Dorsolateral prefrontal cortex (tissue), 120 donors: ENCODE measurements at regions of chr17 and their contacts with region 1.

Region 1: GRCh38 chr17:48131216-48131824 is 23.8 kb downstream of the SNX11 start:
- DNase-seq: peak in 4 of 10 donors; percentile 38 to 60 (median 53)
- H3K4me3 ChIP-seq: no peak overlapping the region
- H3K27ac ChIP-seq: no peak overlapping the region
- H3K27me3 ChIP-seq: no peaks in the 10 kb centered on the region
- CTCF ChIP-seq: peak; percentile 50 to 95 (median 87)

Region 2: GRCh38 chr17:47929218-47930000 is 201.9 kb before region 1 on chr17:
- intact Hi-C with region 1: no loop called
- DNase-seq: no peak
- H3K4me3 ChIP-seq: no peak overlapping the region
- H3K27ac ChIP-seq: peak overlapping the region; percentile 7 to 91 (median 71)
- H3K27me3 ChIP-seq: no peaks in the 10 kb centered on the region
- CTCF ChIP-seq: no peak

Region 3: GRCh38 chr17:48055442-48056237 is 75.7 kb before region 1 on chr17:
- intact Hi-C with region 1: no loop called
- DNase-seq: no peak
- H3K4me3 ChIP-seq: peak overlapping the region in 57 of 59 donors; percentile 14 to 95 (median 60)
- H3K27ac ChIP-seq: peak overlapping the region in 49 of 59 donors; percentile 27 to 99 (median 87)
- H3K27me3 ChIP-seq: no peaks in the 10 kb centered on the region
- CTCF ChIP-seq: no peak

Region 4: GRCh38 chr17:48074315-48075081 is 56.8 kb before region 1 on chr17:
- intact Hi-C with region 1: loop called in 1 of 2 experiments (anchors 5 kb)
- DNase-seq: peak in 6 of 10 donors; percentile 37 to 90 (median 68)
- H3K4me3 ChIP-seq: no peak overlapping the region
- H3K27ac ChIP-seq: peak overlapping the region in 23 of 59 donors; percentile 7 to 67 (median 27)
- H3K27me3 ChIP-seq: no peaks in the 10 kb centered on the region
- CTCF ChIP-seq: peak; percentile 66 to 95 (median 86)

Region 5: DNA sequence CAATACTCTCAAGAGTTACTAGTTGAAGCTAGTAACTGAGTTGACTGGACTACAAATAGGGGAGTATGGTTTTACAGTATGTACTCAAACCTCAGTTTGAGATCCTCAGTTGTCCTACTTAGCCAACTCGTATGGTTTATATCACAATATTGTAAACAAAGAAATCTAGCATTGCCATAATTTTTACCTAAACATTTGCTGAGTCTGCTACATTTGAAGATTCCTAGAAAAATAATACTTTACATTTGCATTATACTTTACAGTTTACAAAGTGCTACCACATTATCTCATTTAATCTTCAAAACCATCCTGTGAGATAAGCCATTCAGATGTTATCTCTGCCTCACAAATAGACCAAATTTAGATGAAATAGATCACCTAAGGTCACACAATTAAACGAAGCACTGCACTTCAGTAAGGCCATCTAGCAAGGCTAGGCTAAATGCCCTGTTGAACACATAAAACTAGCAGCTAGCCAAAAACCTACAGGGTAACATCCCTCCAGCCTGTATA is 46.3 kb before region 1 on chr17:
- intact Hi-C with region 1: loop called (anchors 5 kb)
- DNase-seq: no peak
- H3K4me3 ChIP-seq: no peak overlapping the region
- H3K27ac ChIP-seq: no peak overlapping the region
- H3K27me3 ChIP-seq: no peaks in the 10 kb centered on the region
- CTCF ChIP-seq: no peak